Tibial artery (tissue), 4 donors: ENCODE measurements at regions of chr12 and their contacts with region 1.

Region 1: GRCh38 chr12:49740930-49741881 is at the start of gene TMBIM6:
- DNase-seq: peak; percentile 100
- H3K4me3 ChIP-seq: peak within 1 kb of the TSS; percentile 65 to 70
- H3K27ac ChIP-seq: peak within 1 kb of the TSS; percentile 91 to 95
- H3K4me1 ChIP-seq: peaks cover 0 to 41% (median 35%) of the 10 kb centered on the region in 4 donors
- H3K27me3 ChIP-seq: no peaks in the 10 kb centered on the region
- CTCF ChIP-seq: peak; percentile 95 to 96

Region 2: DNA sequence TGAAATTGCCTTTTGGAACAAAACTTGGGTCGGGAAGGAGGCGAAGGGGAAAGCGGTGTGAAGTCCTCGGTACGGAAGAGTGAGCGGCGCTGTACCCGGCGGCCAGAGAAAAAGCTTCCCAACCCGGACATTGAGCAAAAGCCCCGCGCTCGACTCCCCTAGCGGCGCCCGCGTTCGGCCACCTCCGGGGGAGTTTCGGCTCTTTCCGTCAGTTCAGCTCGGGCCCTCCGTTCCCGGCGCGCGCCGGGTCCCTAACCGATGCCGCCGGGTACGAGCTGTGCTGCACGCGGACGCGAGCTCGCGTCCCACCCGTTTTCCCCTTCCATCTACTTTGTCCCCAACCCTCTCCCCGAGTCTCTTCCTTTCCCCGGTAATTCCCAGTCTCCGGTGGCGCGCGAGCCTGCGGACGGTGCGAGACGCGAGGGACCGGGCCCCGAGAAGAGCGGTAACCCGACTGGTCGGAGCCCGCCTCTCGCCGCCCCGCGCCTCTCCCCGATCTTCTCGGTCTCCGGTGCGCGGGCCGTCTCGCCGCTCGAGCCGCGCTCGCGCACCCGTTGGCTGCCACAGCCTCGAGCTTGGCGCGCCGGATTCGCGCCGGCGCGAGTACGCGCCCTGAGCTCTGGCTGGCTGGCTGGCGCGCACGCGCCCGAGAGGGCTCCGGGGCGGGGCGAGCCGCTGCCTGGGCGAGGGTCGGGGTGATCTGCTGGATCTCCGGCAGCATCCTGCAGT is 374.4 kb before region 1 on chr12:
- intact Hi-C with region 1: loop called (anchors 5 kb)
- DNase-seq: peak; percentile 79 to 92
- H3K4me3 ChIP-seq: peak overlapping the region; percentile 86 to 93
- H3K27ac ChIP-seq: peak overlapping the region; percentile 82 to 90
- H3K4me1 ChIP-seq: peaks cover 0 to 28% (median 16%) of the 10 kb centered on the region in 4 donors
- H3K27me3 ChIP-seq: no peaks in the 10 kb centered on the region
- CTCF ChIP-seq: peak; percentile 25 to 30

Region 3: DNA sequence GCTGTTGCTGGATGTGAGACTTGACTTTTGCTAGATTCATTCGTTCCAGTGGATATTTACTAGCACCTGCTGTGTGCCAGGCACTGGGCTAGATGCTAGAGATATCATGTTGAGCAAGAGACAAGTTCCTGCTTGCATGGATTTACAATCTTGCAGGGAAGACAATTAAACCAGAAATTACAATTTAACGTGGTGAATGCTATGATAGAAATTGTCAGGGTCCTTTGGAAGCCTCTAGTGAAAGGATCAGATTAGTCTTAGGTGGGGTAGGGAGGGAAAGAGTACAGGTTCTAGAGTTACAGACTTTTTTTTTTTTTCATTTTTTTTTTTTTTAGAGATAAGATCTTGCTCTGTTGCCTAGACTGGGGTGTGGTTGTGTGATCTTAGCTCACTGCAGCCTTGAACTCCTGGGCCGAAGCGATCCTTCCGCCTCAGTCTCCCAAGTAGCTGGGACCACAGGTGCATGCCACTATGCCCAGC is 337.2 kb before region 1 on chr12:
- intact Hi-C with region 1: no loop called
- DNase-seq: no peak
- H3K4me3 ChIP-seq: no peak overlapping the region
- H3K27ac ChIP-seq: no peak overlapping the region
- H3K4me1 ChIP-seq: no peaks in the 10 kb centered on the region
- H3K27me3 ChIP-seq: no peaks in the 10 kb centered on the region
- CTCF ChIP-seq: no peak

Region 4: DNA sequence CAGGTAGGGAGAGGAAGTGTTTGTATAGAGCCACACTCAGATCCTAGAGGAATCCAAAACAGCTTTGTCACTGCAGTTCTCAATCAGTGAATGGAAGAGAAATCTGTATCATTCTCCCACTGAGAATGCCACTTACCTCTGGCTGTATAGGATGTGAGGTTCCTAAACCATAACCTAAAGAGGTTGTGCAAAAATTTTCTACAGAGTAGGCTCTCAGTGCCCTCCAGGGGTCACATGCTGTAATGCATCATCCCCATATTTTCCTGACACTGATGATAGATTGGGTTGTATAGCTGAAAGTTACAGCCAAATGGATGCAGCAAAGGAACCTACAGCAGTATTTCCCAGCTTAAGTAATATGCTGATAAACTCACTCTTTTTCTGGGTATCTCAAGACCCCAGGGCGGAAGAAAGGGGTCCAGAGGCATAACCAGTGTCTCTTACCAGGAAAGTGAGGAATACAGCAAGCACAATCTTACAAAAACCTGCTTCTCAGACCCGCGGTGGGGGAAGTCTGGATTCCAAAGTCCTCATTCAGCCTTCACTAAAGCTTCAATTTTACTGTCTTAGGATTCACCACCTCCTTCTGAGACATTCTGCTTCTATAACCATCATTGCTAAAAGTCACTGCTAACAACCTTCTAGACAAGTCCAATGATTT is 97.9 kb after region 1 on chr12:
- intact Hi-C with region 1: loop called (anchors 10 kb)
- DNase-seq: no peak
- H3K4me3 ChIP-seq: no peak overlapping the region
- H3K27ac ChIP-seq: no peak overlapping the region
- H3K4me1 ChIP-seq: peaks cover 0 to 15% (median 12%) of the 10 kb centered on the region in 4 donors
- H3K27me3 ChIP-seq: no peaks in the 10 kb centered on the region
- CTCF ChIP-seq: peak; percentile 53 to 57